K562 (cell line): ENCODE measurements at regions of chrX and their contacts with region 1.

Region 1: DNA sequence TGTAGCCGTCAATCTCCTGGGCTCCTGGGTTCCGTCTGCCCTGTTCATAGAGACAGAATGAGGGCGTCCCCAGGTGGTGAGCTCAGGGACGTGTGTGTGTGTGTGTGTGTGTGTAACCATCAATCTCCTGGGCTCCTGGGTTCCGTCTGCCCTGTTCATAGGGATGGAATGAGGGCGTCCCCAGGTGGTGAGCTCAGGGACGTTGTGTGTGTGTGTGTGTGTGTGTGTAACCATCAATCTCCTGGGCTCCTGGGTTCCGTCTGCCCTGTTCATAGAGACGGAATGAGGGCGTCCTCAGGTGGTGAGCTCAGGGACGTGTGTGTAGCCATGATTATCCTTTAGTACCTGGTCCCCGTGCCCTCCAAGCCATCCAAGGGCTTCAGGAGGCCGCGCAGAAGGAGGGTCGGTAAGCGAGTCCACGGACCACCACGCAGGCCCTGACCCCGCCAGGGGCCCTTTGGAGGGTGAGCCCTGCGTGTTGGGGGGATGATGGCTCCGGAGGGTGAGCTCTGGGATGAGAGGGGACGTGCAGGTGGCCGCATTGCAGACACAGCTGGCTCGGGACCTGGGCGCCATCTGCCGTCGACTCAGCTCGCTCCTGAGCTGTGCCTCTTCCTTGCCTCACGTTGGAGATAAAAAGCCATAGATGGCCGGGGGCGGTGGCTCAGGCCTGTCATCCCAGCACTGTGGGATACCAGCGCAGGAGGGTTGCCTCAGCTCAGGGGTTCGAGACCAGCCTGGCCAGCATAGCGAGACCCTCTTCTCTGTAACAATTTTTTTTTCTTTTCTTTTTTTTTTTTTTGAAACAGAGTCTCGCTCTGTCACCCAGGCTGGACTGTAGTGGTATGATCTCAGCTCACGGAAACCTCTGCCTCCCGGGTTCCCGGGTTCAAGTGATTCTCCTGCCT is 5.4 kb upstream of the GTPBP6 start:
- DNase-seq: peak in 1 of 4 experiments; percentile 70
- ATAC-seq: peak; percentile 69
- H3K4me3 ChIP-seq: no peak overlapping the region
- H3K27ac ChIP-seq: no peak overlapping the region; the same call in 2 of the 3 replicates
- H3K4me1 ChIP-seq: peaks cover 5 to 23% of the 10 kb centered on the region in 2 experiments; a peak in 4 of 5 replicates
- H3K27me3 ChIP-seq: no peaks in the 10 kb centered on the region; a peak in 1 of 5 replicates
- CTCF ChIP-seq: peak in 2 of 3 experiments; percentile 25 to 46; a peak in 4 of 6 replicates
- EP300 ChIP-seq: no peak
- POLR2A ChIP-seq: no peak
- RAD21 ChIP-seq: peak; percentile 25 to 41; a peak in 2 of 4 replicates

Region 2: GRCh38 chrX:386768-387575 is 63.0 kb after region 1 on chrX and contains the start of gene PPP2R3B:
- CTCF ChIA-PET with region 1: no interaction called
- POLR2A ChIA-PET with region 1: no interaction called
- in situ Hi-C with region 1: no loop called
- intact Hi-C with region 1: loop called (anchors 10 kb)
- DNase-seq: peak; percentile 95 to 99 (median 98)
- ATAC-seq: peak; percentile 99
- H3K4me3 ChIP-seq: peak within 1 kb of the TSS; percentile 91
- H3K27ac ChIP-seq: peak within 1 kb of the TSS; percentile 100
- H3K4me1 ChIP-seq: peaks cover 0 to 7% of the 10 kb centered on the region in 2 experiments; a peak in 3 of 5 replicates
- H3K27me3 ChIP-seq: no peaks in the 10 kb centered on the region
- CTCF ChIP-seq: no peak
- EP300 ChIP-seq: no peak
- POLR2A ChIP-seq: peak; percentile 93
- RAD21 ChIP-seq: no peak
- polyA plus RNA-seq, gene PPP2R3B: 0.04 TPM in 1 of 2 experiments, not detected in the other